ENCODE measurements at regions of chr1 and their contacts with region 1.

Region 1: GRCh38 chr1:31938174-31938950 is at the start of gene PTP4A2:
- DNase-seq: peak; percentile 65 to 93 (median 81)
- ATAC-seq: peak; percentile 84
- H3K4me3 ChIP-seq: peak within 1 kb of the TSS; percentile 81
- H3K4me3 Mint-ChIP-seq: peak within 1 kb of the TSS; percentile 92 to 100 (median 96)
- H3K27ac ChIP-seq: peak within 1 kb of the TSS; percentile 81
- H3K27ac Mint-ChIP-seq: peak within 1 kb of the TSS; percentile 90 to 99 (median 95)
- H3K4me1 ChIP-seq: peaks cover 66 to 67% of the 10 kb centered on the region in 2 donors
- H3K4me1 Mint-ChIP-seq: peaks cover 54 to 82% (median 73%) of the 10 kb centered on the region in 7 donors
- H3K27me3 ChIP-seq: no peaks in the 10 kb centered on the region
- H3K27me3 Mint-ChIP-seq: no peaks in the 10 kb centered on the region
- total RNA-seq, gene PTP4A2: 196 to 449 (median 271) TPM

Region 2: DNA sequence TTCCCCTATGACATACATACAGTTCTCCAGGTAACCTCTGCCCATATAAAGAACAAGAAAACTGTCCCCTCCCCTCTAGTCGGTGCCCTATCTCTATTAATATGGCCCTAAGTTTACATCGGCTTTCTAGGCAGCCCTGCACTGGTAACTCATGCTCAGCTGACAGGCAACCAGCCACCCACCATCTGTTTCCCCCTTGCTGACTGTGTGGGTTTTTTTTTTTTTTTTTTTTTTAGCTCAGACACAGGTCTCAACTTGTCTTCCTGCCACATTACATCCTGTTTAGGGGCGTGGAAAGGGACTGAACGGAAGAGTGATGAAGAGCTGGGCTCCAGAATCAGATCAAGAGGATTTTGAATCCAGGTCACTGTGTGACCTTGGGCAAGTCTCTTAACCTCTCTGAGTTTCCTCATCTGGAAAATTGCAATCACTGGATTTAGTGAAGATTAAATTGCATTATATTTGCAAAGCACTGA is 1194.7 kb before region 1 on chr1:
- CTCF ChIA-PET with region 1: no interaction called
- POLR2A ChIA-PET with region 1: no interaction called
- intact Hi-C with region 1: loop called in 1 of 2 experiments (anchors 10 kb)
- DNase-seq: peak in 8 of 9 donors; percentile 58 to 90 (median 82)
- ATAC-seq: peak; percentile 83
- H3K4me3 ChIP-seq: peak overlapping the region; percentile 45
- H3K4me3 Mint-ChIP-seq: peak overlapping the region; percentile 82 to 98 (median 91)
- H3K27ac ChIP-seq: peak overlapping the region; percentile 98
- H3K27ac Mint-ChIP-seq: peak overlapping the region; percentile 90 to 100 (median 97)
- H3K4me1 ChIP-seq: peaks cover 84 to 86% of the 10 kb centered on the region in 2 donors
- H3K4me1 Mint-ChIP-seq: peaks cover 75 to 100% (median 97%) of the 10 kb centered on the region in 7 donors
- H3K27me3 ChIP-seq: no peaks in the 10 kb centered on the region
- H3K27me3 Mint-ChIP-seq: no peaks in the 10 kb centered on the region

Region 3: DNA sequence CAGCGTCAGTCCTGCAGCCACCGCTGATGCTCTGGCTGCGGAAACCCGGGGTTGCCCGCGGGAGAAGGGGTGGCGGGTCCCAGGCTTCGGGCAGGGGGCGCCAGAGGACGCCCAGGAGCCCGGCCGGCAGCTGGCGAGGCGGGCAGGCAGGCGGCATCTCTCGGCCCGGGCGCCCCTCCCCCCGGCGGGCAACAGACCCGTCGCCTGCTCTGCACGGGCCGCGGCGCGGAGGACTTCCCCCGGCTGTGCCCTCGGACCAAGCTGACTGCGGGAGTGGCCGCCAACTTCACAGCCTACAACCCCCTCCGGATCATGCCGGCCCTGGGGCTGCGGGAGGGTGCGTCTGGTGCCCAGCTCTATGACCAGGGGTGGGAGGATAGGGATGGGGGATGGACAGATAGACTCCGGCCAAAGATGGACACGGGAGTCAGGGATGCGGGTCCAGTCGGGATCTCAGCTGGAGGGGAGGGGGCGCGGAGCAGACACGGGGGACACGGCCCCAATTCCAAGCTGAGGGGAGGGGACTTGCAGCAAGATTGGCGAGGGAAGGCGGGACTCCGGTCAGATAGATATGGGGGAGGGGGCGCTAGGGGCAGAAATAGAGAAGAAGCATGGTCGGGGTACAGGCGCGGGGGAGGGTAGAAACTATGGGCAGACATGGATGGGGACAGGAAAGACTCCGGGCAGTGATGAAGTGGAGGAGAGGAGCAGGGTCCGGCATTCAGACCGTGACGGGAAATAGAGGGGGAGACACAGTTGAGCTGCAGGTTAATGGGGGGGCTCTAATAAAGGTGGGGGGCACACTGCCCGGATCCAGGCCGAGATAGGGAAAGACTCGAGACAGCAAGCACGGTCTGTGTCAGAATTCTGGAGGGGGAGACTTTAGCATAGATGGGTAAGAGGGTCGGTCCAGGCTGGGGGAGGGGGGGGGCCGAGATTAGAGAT is 175.4 kb before region 1 on chr1:
- CTCF ChIA-PET with region 1: no interaction called
- POLR2A ChIA-PET with region 1: interaction called, 3 read pairs
- intact Hi-C with region 1: loop called in 1 of 2 experiments (anchors 5 kb)
- DNase-seq: peak; percentile 51 to 81 (median 67)
- ATAC-seq: peak; percentile 64
- H3K4me3 ChIP-seq: peak overlapping the region; percentile 48
- H3K4me3 Mint-ChIP-seq: peak overlapping the region; percentile 71 to 89 (median 82)
- H3K27ac ChIP-seq: no peak overlapping the region
- H3K27ac Mint-ChIP-seq: no peak overlapping the region
- H3K4me1 ChIP-seq: peaks cover 23 to 32% of the 10 kb centered on the region in 2 donors
- H3K4me1 Mint-ChIP-seq: peaks cover 6 to 32% (median 26%) of the 10 kb centered on the region in 7 donors
- H3K27me3 ChIP-seq: no peaks in the 10 kb centered on the region
- H3K27me3 Mint-ChIP-seq: peaks cover 0 to 79% (median 4%) of the 10 kb centered on the region in 5 donors

Region 4: DNA sequence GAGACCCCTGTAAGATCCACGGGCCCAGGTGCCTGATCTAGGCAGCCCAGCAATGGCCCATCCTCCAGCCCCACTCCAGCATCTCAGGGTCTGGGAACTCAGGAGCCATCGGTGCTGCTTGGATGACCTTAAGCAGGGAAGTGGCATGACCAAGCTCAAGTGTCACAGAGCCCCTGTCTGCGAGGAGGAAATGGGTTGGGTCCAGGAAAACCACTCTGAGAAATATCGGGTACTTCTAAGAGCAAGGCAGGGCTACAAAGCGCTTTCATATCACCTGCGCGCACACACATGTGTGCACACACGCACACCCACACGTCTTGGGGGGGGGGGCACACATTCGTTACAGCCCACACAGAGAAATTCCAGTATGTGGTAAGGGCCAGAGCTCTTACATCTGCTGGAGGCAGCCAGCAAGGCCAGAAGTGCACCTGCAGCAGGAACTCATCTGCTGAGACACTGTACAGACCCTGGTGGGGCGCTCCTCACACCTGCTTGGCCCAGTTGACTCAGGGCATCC is 89.9 kb before region 1 on chr1:
- CTCF ChIA-PET with region 1: interaction called, 4 read pairs
- POLR2A ChIA-PET with region 1: interaction called, 12 read pairs
- intact Hi-C with region 1: no loop called
- DNase-seq: peak in 8 of 9 donors; percentile 37 to 69 (median 59)
- ATAC-seq: peak; percentile 89
- H3K4me3 ChIP-seq: peak overlapping the region; percentile 50
- H3K4me3 Mint-ChIP-seq: peak overlapping the region; percentile 58 to 97 (median 76)
- H3K27ac ChIP-seq: peak overlapping the region; percentile 69
- H3K27ac Mint-ChIP-seq: peak overlapping the region; percentile 66 to 98 (median 90)
- H3K4me1 ChIP-seq: peaks cover 18 to 48% of the 10 kb centered on the region in 2 donors
- H3K4me1 Mint-ChIP-seq: peaks cover 48 to 77% (median 64%) of the 10 kb centered on the region in 7 donors
- H3K27me3 ChIP-seq: no peaks in the 10 kb centered on the region
- H3K27me3 Mint-ChIP-seq: no peaks in the 10 kb centered on the region

Region 5: DNA sequence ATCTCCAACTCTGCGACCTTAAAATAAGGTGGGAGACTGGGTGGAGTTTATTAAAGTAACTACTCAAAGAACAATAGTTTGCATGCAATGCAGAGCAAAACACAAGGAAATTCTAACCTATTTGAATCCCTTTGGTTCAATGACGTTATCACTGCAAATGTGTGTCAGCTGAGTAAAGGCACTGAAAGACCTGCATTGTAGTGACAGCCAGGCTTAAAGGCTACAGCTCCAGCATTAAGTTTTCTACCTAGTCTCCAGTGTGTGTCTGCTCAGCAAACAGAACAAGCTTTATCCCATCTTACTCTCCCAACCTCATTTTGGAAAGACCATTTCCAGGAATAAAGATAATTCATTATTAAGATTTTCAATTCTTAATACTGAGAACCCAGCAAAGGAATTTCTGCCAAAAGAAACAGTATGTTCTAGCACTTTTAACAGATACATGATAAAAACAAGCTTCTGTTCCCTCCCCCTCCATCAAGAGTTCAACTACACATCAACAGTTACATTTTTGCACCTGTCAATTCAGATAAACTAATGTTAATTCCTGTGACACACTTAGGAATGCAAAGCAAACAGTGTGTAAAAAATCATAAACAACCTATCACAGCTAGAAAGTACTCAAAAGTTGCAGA is 14.3 kb before region 1 on chr1:
- CTCF ChIA-PET with region 1: interaction called, 7 read pairs
- POLR2A ChIA-PET with region 1: interaction called, 20 read pairs
- intact Hi-C with region 1: loop called (anchors 1 kb)
- DNase-seq: peak in 1 of 9 donors; percentile 26
- ATAC-seq: no peak
- H3K4me3 ChIP-seq: no peak overlapping the region
- H3K4me3 Mint-ChIP-seq: peak overlapping the region in 9 of 10 donors; percentile 55 to 94 (median 68)
- H3K27ac ChIP-seq: peak overlapping the region; percentile 50
- H3K27ac Mint-ChIP-seq: peak overlapping the region; percentile 13 to 88 (median 66)
- H3K4me1 ChIP-seq: peaks cover 53 to 61% of the 10 kb centered on the region in 2 donors
- H3K4me1 Mint-ChIP-seq: peaks cover 65 to 87% (median 76%) of the 10 kb centered on the region in 7 donors
- H3K27me3 ChIP-seq: no peaks in the 10 kb centered on the region
- H3K27me3 Mint-ChIP-seq: no peaks in the 10 kb centered on the region

Region 6: GRCh38 chr1:32063261-32063681 is 124.9 kb after region 1 on chr1:
- CTCF ChIA-PET with region 1: interaction called, 10 read pairs
- POLR2A ChIA-PET with region 1: no interaction called
- intact Hi-C with region 1: loop called in 1 of 2 experiments (anchors 1 kb)
- DNase-seq: peak in 6 of 9 donors; percentile 12 to 46 (median 35)
- ATAC-seq: peak; percentile 60
- H3K4me3 ChIP-seq: no peak overlapping the region
- H3K4me3 Mint-ChIP-seq: no peak overlapping the region
- H3K27ac ChIP-seq: no peak overlapping the region
- H3K27ac Mint-ChIP-seq: peak overlapping the region in 8 of 9 donors; percentile 8 to 79 (median 68)
- H3K4me1 ChIP-seq: peaks cover 4 to 5% of the 10 kb centered on the region in 2 donors
- H3K4me1 Mint-ChIP-seq: peaks cover 10 to 19% (median 12%) of the 10 kb centered on the region in 7 donors
- H3K27me3 ChIP-seq: no peaks in the 10 kb centered on the region
- H3K27me3 Mint-ChIP-seq: no peaks in the 10 kb centered on the region

Region 7: GRCh38 chr1:32521165-32521564 is 582.8 kb after region 1 on chr1:
- CTCF ChIA-PET with region 1: no interaction called
- POLR2A ChIA-PET with region 1: no interaction called
- intact Hi-C with region 1: no loop called
- DNase-seq: no peak
- ATAC-seq: no peak
- H3K4me3 ChIP-seq: no peak overlapping the region
- H3K4me3 Mint-ChIP-seq: peak overlapping the region in 9 of 10 donors; percentile 48 to 83 (median 66)
- H3K27ac ChIP-seq: no peak overlapping the region
- H3K27ac Mint-ChIP-seq: no peak overlapping the region
- H3K4me1 ChIP-seq: no peaks in the 10 kb centered on the region
- H3K4me1 Mint-ChIP-seq: peaks cover 0 to 14% (median 5%) of the 10 kb centered on the region in 7 donors
- H3K27me3 ChIP-seq: no peaks in the 10 kb centered on the region
- H3K27me3 Mint-ChIP-seq: peaks cover 5 to 19% (median 8%) of the 10 kb centered on the region in 5 donors

Measured in naive thymus-derived CD4-positive, alpha-beta T cell (primary cell).